ENCODE measurements at regions of chr5 and their contacts with region 1.

Region 1: GRCh38 chr5:88729084-88729828 is 153.7 kb downstream of the MEF2C start:
- DNase-seq: peak in 1 of 2 experiments; percentile 67
- H3K4me3 ChIP-seq: no peak overlapping the region
- H3K27ac ChIP-seq: no peak overlapping the region
- H3K4me1 ChIP-seq: peaks cover 0 to 4% (median 0%) of the 10 kb centered on the region in 4 experiments; a peak in 1 of 7 replicates
- H3K27me3 ChIP-seq: no peaks in the 10 kb centered on the region
- CTCF ChIP-seq: peak in 2 of 3 experiments; percentile 50 to 61; a peak in 2 of 4 replicates
- EP300 ChIP-seq: no peak
- POLR2A ChIP-seq: no peak
- RAD21 ChIP-seq: peak; percentile 91 to 93

Region 2: DNA sequence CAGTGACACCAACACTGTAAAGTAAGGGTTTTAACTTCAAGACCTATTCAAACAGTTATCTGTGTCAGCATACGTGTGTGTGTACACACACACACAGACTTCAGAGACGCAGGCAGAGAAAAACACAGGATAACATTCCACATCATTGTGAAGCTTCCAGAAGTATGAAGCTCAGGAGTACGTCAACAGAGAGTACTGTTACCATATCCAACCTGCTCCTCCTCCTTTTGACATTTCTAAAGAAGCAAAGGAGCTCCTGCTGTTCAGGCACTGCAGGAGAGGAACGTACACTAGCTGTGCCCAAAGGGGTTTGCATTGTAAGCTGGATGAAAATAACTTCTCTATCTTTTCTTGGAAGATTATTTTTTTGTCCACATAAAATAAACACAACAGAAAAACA is 26.9 kb before region 1 on chr5:
- CTCF ChIA-PET with region 1: interaction called, 53 read pairs
- POLR2A ChIA-PET with region 1: no interaction called
- DNase-seq: no peak
- H3K4me3 ChIP-seq: peak overlapping the region in 1 of 4 experiments; percentile 9; a peak in 1 of 8 replicates
- H3K27ac ChIP-seq: no peak overlapping the region
- H3K4me1 ChIP-seq: peaks cover 0 to 7% (median 2%) of the 10 kb centered on the region in 4 experiments; a peak in 5 of 7 replicates
- H3K27me3 ChIP-seq: no peaks in the 10 kb centered on the region
- CTCF ChIP-seq: no peak
- EP300 ChIP-seq: no peak
- POLR2A ChIP-seq: no peak
- RAD21 ChIP-seq: no peak

Region 3: DNA sequence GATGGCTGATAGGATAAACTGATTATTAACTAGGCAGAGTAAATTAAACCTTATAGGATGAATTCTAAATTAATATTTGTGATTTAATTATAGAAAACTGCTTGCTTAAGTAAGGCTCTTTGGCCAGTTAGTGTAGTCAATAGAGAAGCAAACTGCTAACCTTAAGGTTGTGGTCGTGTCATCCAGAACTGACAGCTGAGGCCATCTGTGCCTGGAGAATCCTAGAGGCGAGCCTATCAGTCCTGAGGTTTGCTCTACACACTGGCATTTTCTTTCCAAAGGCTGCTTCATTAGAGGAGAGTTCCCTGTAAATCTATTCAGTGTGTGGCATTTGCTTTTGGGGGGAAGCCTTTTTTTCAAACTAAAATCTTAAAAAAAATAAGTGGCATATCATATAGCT is 15.4 kb before region 1 on chr5:
- CTCF ChIA-PET with region 1: interaction called, 30 read pairs
- POLR2A ChIA-PET with region 1: no interaction called
- DNase-seq: no peak
- H3K4me3 ChIP-seq: no peak overlapping the region
- H3K27ac ChIP-seq: no peak overlapping the region
- H3K4me1 ChIP-seq: peaks cover 0 to 7% (median 6%) of the 10 kb centered on the region in 4 experiments; a peak in 4 of 7 replicates
- H3K27me3 ChIP-seq: no peaks in the 10 kb centered on the region
- CTCF ChIP-seq: no peak
- EP300 ChIP-seq: no peak
- POLR2A ChIP-seq: no peak
- RAD21 ChIP-seq: no peak

Region 4: DNA sequence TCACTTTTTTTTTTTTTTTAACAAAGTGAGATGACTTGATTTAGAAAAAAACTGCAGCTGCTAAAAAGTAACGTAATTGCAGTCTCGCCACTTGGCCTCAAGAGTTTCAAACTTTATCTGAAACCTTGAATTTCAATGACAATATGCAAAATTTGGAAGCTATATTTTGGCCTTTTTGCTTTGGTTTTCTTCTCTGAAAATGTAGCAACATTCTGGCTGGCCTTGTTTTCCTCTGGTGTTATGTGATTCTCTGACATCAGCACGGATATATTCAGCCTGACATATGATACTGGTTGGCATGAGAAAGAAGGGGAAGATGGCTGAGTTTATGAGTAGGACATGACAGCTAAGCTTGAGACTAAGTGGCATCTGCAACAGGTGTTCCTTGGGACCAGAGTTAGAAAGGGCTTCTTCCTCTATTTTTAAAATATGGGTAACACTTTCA is 17.2 kb after region 1 on chr5:
- CTCF ChIA-PET with region 1: interaction called, 39 read pairs
- POLR2A ChIA-PET with region 1: no interaction called
- DNase-seq: no peak
- H3K4me3 ChIP-seq: no peak overlapping the region
- H3K27ac ChIP-seq: no peak overlapping the region
- H3K4me1 ChIP-seq: no peaks in the 10 kb centered on the region
- H3K27me3 ChIP-seq: no peaks in the 10 kb centered on the region
- CTCF ChIP-seq: no peak
- EP300 ChIP-seq: no peak
- POLR2A ChIP-seq: no peak
- RAD21 ChIP-seq: no peak

Region 5: GRCh38 chr5:90264689-90265544 is 1535.7 kb after region 1 on chr5:
- CTCF ChIA-PET with region 1: interaction called, 16 read pairs
- POLR2A ChIA-PET with region 1: no interaction called
- DNase-seq: peak; percentile 25 to 61
- H3K4me3 ChIP-seq: no peak overlapping the region
- H3K27ac ChIP-seq: no peak overlapping the region
- H3K4me1 ChIP-seq: peaks cover 0 to 4% (median 0%) of the 10 kb centered on the region in 4 experiments; a peak in 1 of 7 replicates
- H3K27me3 ChIP-seq: no peaks in the 10 kb centered on the region
- CTCF ChIP-seq: peak; percentile 71 to 89 (median 87)
- EP300 ChIP-seq: no peak
- POLR2A ChIP-seq: no peak
- RAD21 ChIP-seq: peak; percentile 99

Measured in H1 (cell line).